ENCODE measurements at regions of chr1 and their contacts with region 1.

Region 1: DNA sequence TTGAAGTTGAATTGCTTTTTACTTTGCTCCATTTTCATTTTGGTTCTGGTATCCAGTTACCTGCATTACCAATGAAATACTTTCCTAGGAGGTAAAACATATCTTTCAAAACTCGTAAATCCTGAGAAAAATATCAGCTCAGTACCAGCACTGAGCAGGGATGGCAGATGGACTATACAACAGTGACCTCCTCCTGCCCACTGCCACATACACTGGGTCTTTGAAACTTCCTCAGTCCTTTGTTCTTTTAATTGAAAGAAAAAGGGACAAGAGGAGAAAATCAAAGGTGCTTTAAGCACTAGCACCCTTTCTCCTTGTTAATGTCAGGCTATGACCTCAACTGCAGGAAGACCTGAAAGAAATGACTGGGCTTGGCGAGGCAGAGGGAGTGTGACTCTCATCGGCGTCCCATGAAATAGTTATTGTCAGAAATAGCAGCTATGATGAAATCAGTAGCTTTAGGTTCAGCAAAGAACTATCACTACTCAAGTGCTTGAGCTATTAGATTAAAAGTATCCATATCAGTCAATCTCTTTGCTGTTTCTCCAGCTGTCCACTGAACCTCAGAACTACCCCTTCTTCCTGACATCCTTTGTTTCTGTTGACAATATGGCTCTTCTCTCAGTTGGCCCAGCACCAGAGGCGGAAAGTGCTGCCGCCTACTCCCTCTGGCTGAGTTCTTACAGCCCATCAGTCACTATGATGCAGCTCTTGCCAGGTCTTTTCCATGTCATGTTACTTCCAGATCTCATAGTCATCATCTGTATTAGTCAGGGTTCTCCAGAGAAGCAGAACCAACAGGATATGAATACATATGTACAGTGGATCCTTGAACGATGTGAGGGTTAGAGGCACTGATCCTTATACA is 207.0 kb upstream of the MAP1LC3C start:
- DNase-seq: no peak
- ATAC-seq: no peak; the same call in 1 of the 2 replicates
- H3K4me3 ChIP-seq: no peak overlapping the region
- H3K27ac ChIP-seq: peak overlapping the region; percentile 39; the same call in 1 of the 2 replicates
- H3K4me1 ChIP-seq: peaks cover 7% of the 10 kb centered on the region; the same call in 1 of the 2 replicates
- H3K27me3 ChIP-seq: no peaks in the 10 kb centered on the region
- CTCF ChIP-seq: no peak

Region 2: DNA sequence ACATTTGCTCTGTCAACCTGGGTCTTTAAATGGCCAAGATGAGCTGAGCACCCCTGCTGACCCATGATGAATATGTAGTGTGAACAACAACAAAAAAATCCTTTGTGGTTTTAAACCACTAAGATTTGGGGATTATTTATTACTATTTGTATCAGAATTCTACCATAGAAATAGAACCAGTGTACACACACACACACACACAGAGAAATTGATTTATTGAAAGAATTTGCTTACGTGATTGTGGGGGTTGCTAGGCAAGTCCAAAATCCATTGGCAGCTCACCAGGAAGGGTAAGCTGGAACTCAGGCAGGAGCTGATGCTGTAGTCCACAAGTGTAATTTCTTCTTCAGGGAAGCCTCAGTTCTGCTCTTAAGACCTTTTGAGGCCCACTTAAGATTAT is 124.4 kb before region 1 on chr1:
- CTCF ChIA-PET with region 1: no interaction called
- POLR2A ChIA-PET with region 1: no interaction called
- in situ Hi-C with region 1: no loop called
- intact Hi-C with region 1: no loop called
- DNase-seq: no peak
- ATAC-seq: no peak
- H3K4me3 ChIP-seq: no peak overlapping the region
- H3K27ac ChIP-seq: no peak overlapping the region
- H3K4me1 ChIP-seq: no peaks in the 10 kb centered on the region; the same call in 1 of the 2 replicates
- H3K27me3 ChIP-seq: no peaks in the 10 kb centered on the region
- CTCF ChIP-seq: no peak

Region 3: DNA sequence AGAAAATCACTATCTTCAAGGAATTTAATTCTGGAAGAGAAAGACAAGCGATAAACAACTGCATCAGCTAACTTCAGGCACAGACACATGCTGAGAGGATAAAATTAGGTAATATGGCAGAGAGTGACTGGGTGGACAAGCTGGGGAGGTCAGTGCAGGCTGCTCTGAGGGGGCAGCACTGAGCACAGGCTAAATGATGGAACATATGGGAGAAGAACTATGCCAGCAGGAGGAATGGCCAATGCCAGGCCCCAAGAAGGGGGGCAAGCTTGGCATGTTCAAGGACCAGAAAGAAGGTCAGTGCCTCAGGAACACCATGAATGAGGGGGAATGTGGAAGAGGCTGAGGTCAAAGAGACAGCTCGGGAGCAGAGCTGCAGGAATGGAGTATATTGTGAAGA is 16.3 kb before region 1 on chr1:
- CTCF ChIA-PET with region 1: interaction called, 13 read pairs
- POLR2A ChIA-PET with region 1: no interaction called
- in situ Hi-C with region 1: no loop called
- intact Hi-C with region 1: no loop called
- DNase-seq: no peak
- ATAC-seq: no peak
- H3K4me3 ChIP-seq: no peak overlapping the region
- H3K27ac ChIP-seq: no peak overlapping the region
- H3K4me1 ChIP-seq: no peaks in the 10 kb centered on the region
- H3K27me3 ChIP-seq: no peaks in the 10 kb centered on the region
- CTCF ChIP-seq: peak; percentile 45

Region 4: GRCh38 chr1:242240077-242240476 is 34.2 kb after region 1 on chr1:
- CTCF ChIA-PET with region 1: no interaction called
- POLR2A ChIA-PET with region 1: no interaction called
- in situ Hi-C with region 1: no loop called
- intact Hi-C with region 1: no loop called
- DNase-seq: no peak
- ATAC-seq: no peak
- H3K4me3 ChIP-seq: no peak overlapping the region
- H3K27ac ChIP-seq: no peak overlapping the region
- H3K4me1 ChIP-seq: no peaks in the 10 kb centered on the region
- H3K27me3 ChIP-seq: no peaks in the 10 kb centered on the region
- CTCF ChIP-seq: no peak

Measured in Panc1 (cell line).